ENCODE measurements at regions of chr4 and their contacts with region 1.

Region 1: DNA sequence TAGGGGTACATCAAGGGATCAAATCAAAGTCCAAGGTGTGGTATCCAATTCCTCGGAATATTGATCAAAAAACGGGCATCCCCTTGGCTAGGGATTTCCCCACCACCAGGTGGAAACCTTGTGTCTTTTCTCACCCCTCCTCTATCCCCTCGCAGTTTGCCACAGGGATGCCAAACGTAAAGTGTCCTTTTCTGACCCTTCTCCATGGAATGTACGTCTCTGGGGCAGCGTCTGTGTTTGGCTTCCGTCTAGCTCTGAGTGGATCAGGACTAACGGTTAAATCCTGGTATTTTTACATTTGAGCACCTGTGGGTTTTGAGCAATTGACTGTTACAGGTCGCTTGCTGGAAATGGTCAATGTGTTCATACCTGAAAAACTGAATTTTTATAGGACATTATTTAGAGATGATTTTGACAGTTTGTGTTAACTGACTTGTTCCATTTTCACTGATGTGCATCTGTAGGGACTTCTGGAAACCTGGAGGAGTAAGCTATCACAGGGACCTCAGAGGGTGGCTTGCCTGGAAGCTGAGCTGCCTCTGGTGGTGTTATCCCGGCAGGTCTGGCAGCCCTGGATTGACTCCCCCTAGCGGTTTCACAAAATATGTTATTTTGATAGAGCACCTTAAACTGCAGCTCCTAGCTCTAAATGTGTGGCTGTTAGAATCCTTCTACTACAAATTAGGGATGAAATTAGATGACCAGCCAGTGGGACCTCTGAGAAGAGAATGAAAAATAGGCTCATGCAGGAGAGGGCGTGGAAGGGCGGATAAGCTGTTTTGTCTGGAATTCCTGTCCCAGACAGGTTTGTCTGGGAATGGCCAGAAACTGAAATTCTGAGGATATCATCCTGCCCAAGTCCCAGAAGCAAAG is 8.8 kb upstream of the MGST2 start:
- DNase-seq: peak; percentile 79 to 83
- H3K4me3 ChIP-seq: no peak overlapping the region
- H3K4me3 Mint-ChIP-seq: peak overlapping the region; percentile 61
- H3K27ac Mint-ChIP-seq: peak overlapping the region; percentile 40
- H3K4me1 ChIP-seq: peaks cover 47% of the 10 kb centered on the region
- H3K4me1 Mint-ChIP-seq: peaks cover 41% of the 10 kb centered on the region
- H3K27me3 ChIP-seq: no peaks in the 10 kb centered on the region
- H3K27me3 Mint-ChIP-seq: no peaks in the 10 kb centered on the region
- CTCF ChIP-seq: peak; percentile 71 to 89

Region 2: DNA sequence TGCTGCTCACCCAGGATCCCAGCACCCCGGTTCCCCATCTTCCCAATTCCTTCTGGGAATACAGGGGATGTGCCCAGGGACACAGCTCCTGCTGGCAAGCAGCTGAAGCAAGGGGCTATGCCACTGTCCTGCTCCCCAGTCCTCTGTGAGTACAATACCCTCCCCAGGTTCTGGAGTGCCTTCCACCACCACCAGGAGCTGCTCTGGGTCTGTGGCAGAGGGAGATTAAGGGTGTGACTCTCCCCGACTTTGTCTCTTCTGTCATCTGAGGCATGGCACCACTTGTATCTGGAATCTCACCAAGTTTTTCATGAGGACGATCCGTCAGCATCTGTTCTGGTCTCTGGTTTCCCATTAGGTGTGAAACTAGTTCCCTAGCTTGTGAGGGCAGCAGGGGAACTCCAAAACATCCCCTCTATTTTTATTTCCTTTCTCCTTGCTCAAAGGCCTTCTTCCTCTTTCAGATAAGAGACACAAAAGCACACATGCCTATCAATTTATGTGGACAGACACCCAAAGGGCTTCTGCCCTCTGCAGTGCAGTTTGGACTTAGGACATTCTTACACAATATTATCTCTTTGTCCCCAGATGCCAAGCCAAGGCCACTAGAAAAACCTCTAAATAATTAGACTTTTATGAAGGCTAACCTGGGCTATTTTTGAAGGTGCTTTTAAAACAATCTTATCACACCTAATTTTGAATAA is 35.6 kb after region 1 on chr4:
- CTCF ChIA-PET with region 1: interaction called, 11 read pairs
- POLR2A ChIA-PET with region 1: interaction called, 4 read pairs
- intact Hi-C with region 1: loop called (anchors 1 kb)
- DNase-seq: peak; percentile 60 to 64
- H3K4me3 ChIP-seq: no peak overlapping the region
- H3K4me3 Mint-ChIP-seq: peak overlapping the region; percentile 60
- H3K27ac Mint-ChIP-seq: peak overlapping the region; percentile 93
- H3K4me1 ChIP-seq: peaks cover 87% of the 10 kb centered on the region
- H3K4me1 Mint-ChIP-seq: peaks cover 40% of the 10 kb centered on the region
- H3K27me3 ChIP-seq: no peaks in the 10 kb centered on the region
- H3K27me3 Mint-ChIP-seq: no peaks in the 10 kb centered on the region
- CTCF ChIP-seq: peak; percentile 46 to 48

Region 3: GRCh38 chr4:139734875-139735380 is 78.1 kb after region 1 on chr4:
- CTCF ChIA-PET with region 1: interaction called, 4 read pairs
- POLR2A ChIA-PET with region 1: no interaction called
- intact Hi-C with region 1: loop called (anchors 2 kb)
- DNase-seq: peak; percentile 82 to 89
- H3K4me3 ChIP-seq: peak overlapping the region; percentile 29
- H3K4me3 Mint-ChIP-seq: peak overlapping the region; percentile 69
- H3K27ac Mint-ChIP-seq: peak overlapping the region; percentile 78
- H3K4me1 ChIP-seq: peaks cover 39% of the 10 kb centered on the region
- H3K4me1 Mint-ChIP-seq: peaks cover 22% of the 10 kb centered on the region
- H3K27me3 ChIP-seq: no peaks in the 10 kb centered on the region
- H3K27me3 Mint-ChIP-seq: no peaks in the 10 kb centered on the region
- CTCF ChIP-seq: peak; percentile 76 to 82

Region 4: GRCh38 chr4:140213749-140214148 is 556.9 kb after region 1 on chr4:
- CTCF ChIA-PET with region 1: no interaction called
- POLR2A ChIA-PET with region 1: no interaction called
- intact Hi-C with region 1: no loop called
- DNase-seq: no peak
- H3K4me3 ChIP-seq: no peak overlapping the region
- H3K4me3 Mint-ChIP-seq: no peak overlapping the region
- H3K27ac Mint-ChIP-seq: no peak overlapping the region
- H3K4me1 ChIP-seq: peaks cover 20% of the 10 kb centered on the region
- H3K4me1 Mint-ChIP-seq: peaks cover 6% of the 10 kb centered on the region
- H3K27me3 ChIP-seq: no peaks in the 10 kb centered on the region
- H3K27me3 Mint-ChIP-seq: no peaks in the 10 kb centered on the region
- CTCF ChIP-seq: no peak

Region 5: DNA sequence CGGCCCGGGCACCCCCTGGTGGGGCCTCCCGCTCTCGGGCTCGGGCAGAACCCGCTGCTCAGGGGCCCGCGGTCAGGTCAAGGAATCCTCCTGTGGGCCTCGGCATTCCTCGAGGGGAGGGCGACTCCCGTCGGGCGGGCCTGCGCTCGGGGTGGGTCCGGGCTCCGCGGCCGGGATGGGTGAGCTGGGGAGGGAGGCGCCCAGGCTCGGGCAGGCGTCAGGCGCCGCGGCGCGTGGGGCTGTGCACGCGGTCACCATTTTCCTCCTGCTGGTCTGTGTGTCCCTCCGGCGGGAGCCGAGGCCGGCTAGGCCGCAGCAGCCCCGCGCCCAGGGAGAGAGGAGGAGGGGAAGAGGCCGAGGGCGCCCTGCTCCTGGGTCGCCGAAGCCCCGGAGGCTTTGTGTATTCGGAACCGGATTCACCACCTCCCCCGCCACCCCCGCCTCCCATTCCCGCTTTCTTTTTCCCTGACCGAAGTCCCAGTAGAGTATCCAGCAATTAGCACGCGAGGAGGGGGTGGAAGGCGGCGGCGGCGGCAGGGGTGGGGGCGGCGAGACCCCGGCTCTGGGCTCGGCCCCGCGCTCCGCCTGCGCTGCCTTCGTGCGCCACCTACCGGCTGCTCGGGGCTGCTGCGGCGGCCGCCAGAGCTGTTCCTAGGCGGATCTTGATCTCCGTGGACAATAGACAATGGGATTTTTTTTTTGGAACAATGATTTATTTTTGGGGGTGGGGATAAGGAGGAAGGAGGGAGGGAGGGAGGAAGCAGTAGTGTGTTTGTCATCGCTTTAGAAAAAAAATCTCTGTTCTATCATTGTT is 596.1 kb after region 1 on chr4:
- CTCF ChIA-PET with region 1: interaction called, 8 read pairs
- POLR2A ChIA-PET with region 1: no interaction called
- intact Hi-C with region 1: loop called (anchors 1 kb)
- DNase-seq: peak; percentile 82 to 87
- H3K4me3 ChIP-seq: peak overlapping the region; percentile 66
- H3K4me3 Mint-ChIP-seq: peak overlapping the region; percentile 0
- H3K27ac Mint-ChIP-seq: peak overlapping the region; percentile 88
- H3K4me1 ChIP-seq: peaks cover 58% of the 10 kb centered on the region
- H3K4me1 Mint-ChIP-seq: peaks cover 26% of the 10 kb centered on the region
- H3K27me3 ChIP-seq: no peaks in the 10 kb centered on the region
- H3K27me3 Mint-ChIP-seq: no peaks in the 10 kb centered on the region
- CTCF ChIP-seq: peak; percentile 79 to 90